Activated naive CD4-positive, alpha-beta T cell treated with anti-CD3 and anti-CD28 coated beads for 36 hours (primary cell): ENCODE measurements at regions of chr18 and their contacts with region 1.

Region 1: GRCh38 chr18:8301427-8302172 is 307.6 kb upstream of the RAB12 start:
- DNase-seq: no peak
- H3K4me3 Mint-ChIP-seq: no peak overlapping the region
- H3K27ac Mint-ChIP-seq: no peak overlapping the region
- H3K4me1 Mint-ChIP-seq: no peaks in the 10 kb centered on the region
- H3K27me3 Mint-ChIP-seq: no peaks in the 10 kb centered on the region

Region 2: GRCh38 chr18:7452331-7452730 is 849.3 kb before region 1 on chr18:
- CTCF ChIA-PET with region 1: no interaction called
- intact Hi-C with region 1: no loop called
- DNase-seq: no peak
- H3K4me3 Mint-ChIP-seq: no peak overlapping the region
- H3K27ac Mint-ChIP-seq: no peak overlapping the region
- H3K4me1 Mint-ChIP-seq: no peaks in the 10 kb centered on the region
- H3K27me3 Mint-ChIP-seq: no peaks in the 10 kb centered on the region

Region 3: GRCh38 chr18:8367217-8367988 is 65.8 kb after region 1 on chr18:
- CTCF ChIA-PET with region 1: no interaction called
- intact Hi-C with region 1: loop called (anchors 10 kb)
- DNase-seq: peak; percentile 28
- H3K4me3 Mint-ChIP-seq: no peak overlapping the region
- H3K27ac Mint-ChIP-seq: no peak overlapping the region
- H3K4me1 Mint-ChIP-seq: peaks cover 3% of the 10 kb centered on the region
- H3K27me3 Mint-ChIP-seq: peaks cover 21% of the 10 kb centered on the region